ENCODE measurements at regions of chr17 and their contacts with region 1.

Region 1: GRCh38 chr17:63798572-63799106 is 24.7 kb downstream of the DDX42 start:
- DNase-seq: peak; percentile 8
- ATAC-seq: no peak
- H3K4me3 ChIP-seq: no peak overlapping the region
- H3K27ac ChIP-seq: no peak overlapping the region
- H3K4me1 ChIP-seq: no peaks in the 10 kb centered on the region
- H3K27me3 ChIP-seq: no peaks in the 10 kb centered on the region
- CTCF ChIP-seq: no peak
- POLR2A ChIP-seq: no peak
- RAD21 ChIP-seq: no peak

Region 2: DNA sequence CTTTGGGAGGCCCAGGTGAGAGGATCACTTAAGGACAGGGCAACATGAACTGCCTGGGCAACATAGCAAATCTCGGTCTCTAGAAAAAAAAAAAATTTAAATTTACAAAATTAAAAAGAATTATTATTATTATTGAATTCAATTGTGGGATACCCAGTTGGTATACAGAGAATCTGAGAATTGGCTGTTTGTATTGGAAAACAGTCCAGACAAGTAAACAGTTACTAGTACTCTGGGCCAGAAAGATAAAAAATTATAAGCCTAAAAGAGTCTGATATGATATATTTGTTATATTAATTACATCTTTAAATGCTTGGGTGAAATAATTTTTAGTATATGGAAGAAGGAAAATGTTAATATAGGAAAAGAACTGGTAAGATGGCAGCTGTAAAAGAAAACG is 40.2 kb before region 1 on chr17:
- CTCF ChIA-PET with region 1: no interaction called
- POLR2A ChIA-PET with region 1: no interaction called
- dilution Hi-C with region 1: no loop called
- in situ Hi-C with region 1: no loop called
- intact Hi-C with region 1: loop called (anchors 5 kb)
- DNase-seq: no peak
- ATAC-seq: no peak
- H3K4me3 ChIP-seq: no peak overlapping the region
- H3K27ac ChIP-seq: no peak overlapping the region
- H3K4me1 ChIP-seq: no peaks in the 10 kb centered on the region
- H3K27me3 ChIP-seq: no peaks in the 10 kb centered on the region
- CTCF ChIP-seq: no peak
- POLR2A ChIP-seq: no peak
- RAD21 ChIP-seq: no peak

Region 3: GRCh38 chr17:64447526-64447925 is 648.9 kb after region 1 on chr17:
- CTCF ChIA-PET with region 1: interaction called, 10 read pairs
- POLR2A ChIA-PET with region 1: no interaction called
- dilution Hi-C with region 1: no loop called
- in situ Hi-C with region 1: no loop called
- intact Hi-C with region 1: no loop called
- DNase-seq: no peak
- ATAC-seq: no peak
- H3K4me3 ChIP-seq: no peak overlapping the region
- H3K27ac ChIP-seq: no peak overlapping the region
- H3K4me1 ChIP-seq: peaks cover 2% of the 10 kb centered on the region; the same call in 1 of the 2 replicates
- H3K27me3 ChIP-seq: peaks cover 7% of the 10 kb centered on the region
- CTCF ChIP-seq: no peak
- POLR2A ChIP-seq: no peak
- RAD21 ChIP-seq: no peak

Measured in IMR-90 (cell line).